GM12878 (cell line): ENCODE measurements at regions of chr19 and their contacts with region 1.

Region 1: DNA sequence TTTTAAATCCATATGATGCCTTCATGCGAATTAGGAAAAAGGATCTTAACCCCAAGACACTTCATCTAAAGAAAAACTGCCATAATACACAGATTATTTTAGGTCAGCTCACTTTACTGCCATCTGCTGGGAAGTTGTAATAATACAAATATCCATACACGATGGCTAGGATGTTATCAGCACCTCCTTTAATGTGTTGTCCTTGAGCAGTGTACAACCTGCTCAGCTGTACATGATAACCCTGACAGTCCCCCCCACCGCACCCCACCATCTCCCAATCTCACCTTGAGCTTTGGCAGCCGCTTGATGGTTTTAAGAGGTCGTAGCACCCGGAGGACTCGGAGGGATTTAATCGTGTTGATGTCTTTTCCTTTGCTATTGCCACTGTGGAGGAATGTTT is 112.2 kb downstream of the IER2 start:
- DNase-seq: no peak
- ATAC-seq: peak; percentile 78
- H3K4me3 ChIP-seq: no peak overlapping the region
- H3K27ac ChIP-seq: no peak overlapping the region
- H3K4me1 ChIP-seq: peaks cover 16% of the 10 kb centered on the region
- H3K27me3 ChIP-seq: no peaks in the 10 kb centered on the region
- CTCF ChIP-seq: peak; percentile 46 to 68 (median 52); a peak in 4 of 6 replicates
- EP300 ChIP-seq: no peak
- POLR2A ChIP-seq: no peak
- RAD21 ChIP-seq: peak; percentile 58

Region 2: GRCh38 chr19:12974301-12975220 is 287.9 kb before region 1 on chr19:
- CTCF ChIA-PET with region 1: interaction called, 12 read pairs
- POLR2A ChIA-PET with region 1: no interaction called
- RAD21 ChIA-PET with region 1: no interaction called
- SMC1A ChIA-PET with region 1: no interaction called
- in situ Hi-C with region 1: loop called (anchors 10 kb)
- intact Hi-C with region 1: loop called (anchors 5 kb)
- DNase-seq: no peak
- ATAC-seq: peak; percentile 68
- H3K4me3 ChIP-seq: no peak overlapping the region
- H3K27ac ChIP-seq: no peak overlapping the region
- H3K4me1 ChIP-seq: no peaks in the 10 kb centered on the region
- H3K27me3 ChIP-seq: no peaks in the 10 kb centered on the region
- CTCF ChIP-seq: no peak
- EP300 ChIP-seq: no peak
- POLR2A ChIP-seq: no peak
- RAD21 ChIP-seq: no peak

Region 3: GRCh38 chr19:13117772-13118423 is 144.6 kb before region 1 on chr19 and contains the start of gene NACC1:
- CTCF ChIA-PET with region 1: interaction called, 3 read pairs
- POLR2A ChIA-PET with region 1: no interaction called
- RAD21 ChIA-PET with region 1: no interaction called
- SMC1A ChIA-PET with region 1: interaction called, 6 read pairs
- in situ Hi-C with region 1: no loop called
- intact Hi-C with region 1: loop called (anchors 5 kb)
- DNase-seq: no peak
- ATAC-seq: peak; percentile 82
- H3K4me3 ChIP-seq: peak within 1 kb of the TSS; percentile 98
- H3K27ac ChIP-seq: peak within 1 kb of the TSS; percentile 75
- H3K4me1 ChIP-seq: peaks cover 36% of the 10 kb centered on the region
- H3K27me3 ChIP-seq: no peaks in the 10 kb centered on the region
- CTCF ChIP-seq: no peak
- EP300 ChIP-seq: no peak
- POLR2A ChIP-seq: peak; percentile 66
- RAD21 ChIP-seq: 0 out of 2 replicates have a peak, but pooled peaks have one; percentile 0
- polyA plus RNA-seq, gene NACC1: 0.18 to 0.27 TPM

Region 4: GRCh38 chr19:13181747-13182388 is 80.6 kb before region 1 on chr19:
- CTCF ChIA-PET with region 1: interaction called, 4 read pairs
- POLR2A ChIA-PET with region 1: no interaction called
- RAD21 ChIA-PET with region 1: interaction called, 4 read pairs
- SMC1A ChIA-PET with region 1: interaction called, 12 read pairs
- in situ Hi-C with region 1: no loop called
- intact Hi-C with region 1: no loop called
- DNase-seq: no peak
- ATAC-seq: peak; percentile 87
- H3K4me3 ChIP-seq: no peak overlapping the region
- H3K27ac ChIP-seq: peak overlapping the region; percentile 52
- H3K4me1 ChIP-seq: peaks cover 17% of the 10 kb centered on the region
- H3K27me3 ChIP-seq: no peaks in the 10 kb centered on the region
- CTCF ChIP-seq: no peak
- EP300 ChIP-seq: no peak; a peak in 1 of 4 replicates
- POLR2A ChIP-seq: no peak
- RAD21 ChIP-seq: no peak

Region 5: DNA sequence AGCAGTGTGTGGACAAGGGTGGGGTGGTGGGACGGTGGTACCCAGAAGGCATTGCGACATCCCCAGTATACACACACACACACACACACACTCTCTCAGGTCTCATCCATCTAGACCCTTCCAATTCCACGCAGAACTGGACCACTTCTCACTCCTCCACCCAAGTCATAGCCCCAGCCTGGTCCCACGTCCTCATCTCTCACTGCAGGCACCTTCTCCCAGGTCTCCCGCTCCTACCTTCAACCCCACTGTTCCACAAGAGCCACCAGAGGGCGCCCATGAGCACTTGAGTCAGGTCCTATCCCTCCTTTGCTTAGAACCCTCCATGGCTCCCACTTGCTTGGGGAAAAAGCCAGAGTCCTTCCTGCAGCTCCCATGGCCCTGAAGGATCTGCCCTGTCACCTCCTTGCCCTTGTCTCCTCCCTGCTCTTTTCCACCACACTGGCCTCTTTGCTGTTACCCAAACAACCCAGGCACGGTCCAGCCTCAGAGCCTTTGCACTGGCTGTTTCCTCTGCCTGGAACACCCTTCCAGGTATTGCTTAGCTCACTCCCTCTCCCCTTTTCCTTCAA is 49.6 kb before region 1 on chr19:
- CTCF ChIA-PET with region 1: interaction called, 9 read pairs
- POLR2A ChIA-PET with region 1: interaction called, 3 read pairs
- RAD21 ChIA-PET with region 1: interaction called, 4 read pairs
- SMC1A ChIA-PET with region 1: interaction called, 3 read pairs
- in situ Hi-C with region 1: loop called (anchors 5 kb)
- intact Hi-C with region 1: loop called (anchors 2 kb)
- DNase-seq: peak; percentile 20
- ATAC-seq: peak; percentile 20; the same call in 1 of the 3 replicates
- H3K4me3 ChIP-seq: no peak overlapping the region
- H3K27ac ChIP-seq: no peak overlapping the region
- H3K4me1 ChIP-seq: peaks cover 19% of the 10 kb centered on the region
- H3K27me3 ChIP-seq: no peaks in the 10 kb centered on the region
- CTCF ChIP-seq: peak; percentile 63 to 80 (median 78)
- EP300 ChIP-seq: no peak
- POLR2A ChIP-seq: no peak
- RAD21 ChIP-seq: peak; percentile 48